Naive thymus-derived CD4-positive, alpha-beta T cell (primary cell): ENCODE measurements at regions of chr6 and their contacts with region 1.

Region 1: GRCh38 chr6:43635387-43636307 is at the start of gene MAD2L1BP:
- DNase-seq: peak; percentile 65 to 92 (median 88)
- ATAC-seq: peak; percentile 94
- H3K4me3 ChIP-seq: peak within 1 kb of the TSS; percentile 91
- H3K4me3 Mint-ChIP-seq: peak within 1 kb of the TSS; percentile 92 to 100 (median 99)
- H3K27ac ChIP-seq: peak within 1 kb of the TSS; percentile 87
- H3K27ac Mint-ChIP-seq: peak within 1 kb of the TSS; percentile 93 to 98 (median 96)
- H3K4me1 ChIP-seq: peaks cover 28 to 30% of the 10 kb centered on the region in 2 donors
- H3K4me1 Mint-ChIP-seq: peaks cover 34 to 65% (median 48%) of the 10 kb centered on the region in 7 donors
- H3K27me3 ChIP-seq: no peaks in the 10 kb centered on the region
- H3K27me3 Mint-ChIP-seq: peaks cover 0 to 3% (median 0%) of the 10 kb centered on the region in 5 donors
- total RNA-seq, gene MAD2L1BP: 25.2 to 44.5 (median 28.0) TPM

Region 2: GRCh38 chr6:43575772-43576551 is 59.7 kb before region 1 on chr6 and contains the starts of genes POLH and XPO5:
- CTCF ChIA-PET with region 1: no interaction called
- POLR2A ChIA-PET with region 1: interaction called, 3 read pairs
- intact Hi-C with region 1: loop called in 1 of 2 experiments (anchors 1 kb)
- DNase-seq: peak; percentile 83 to 94 (median 88)
- ATAC-seq: peak; percentile 99
- H3K4me3 ChIP-seq: peak within 1 kb of the TSS; percentile 77
- H3K4me3 Mint-ChIP-seq: peak within 1 kb of the TSS; percentile 90 to 100 (median 98)
- H3K27ac ChIP-seq: peak within 1 kb of the TSS; percentile 89
- H3K27ac Mint-ChIP-seq: peak within 1 kb of the TSS; percentile 78 to 94 (median 92)
- H3K4me1 ChIP-seq: peaks cover 20 to 21% of the 10 kb centered on the region in 2 donors
- H3K4me1 Mint-ChIP-seq: peaks cover 21 to 61% (median 40%) of the 10 kb centered on the region in 7 donors
- H3K27me3 ChIP-seq: no peaks in the 10 kb centered on the region
- H3K27me3 Mint-ChIP-seq: no peaks in the 10 kb centered on the region
- total RNA-seq, gene POLH: 9.1 to 65.6 (median 19.3) TPM
- total RNA-seq, gene XPO5: 35.0 to 107 (median 41.9) TPM